ENCODE measurements at regions of chr2 and their contacts with region 1.

Region 1: DNA sequence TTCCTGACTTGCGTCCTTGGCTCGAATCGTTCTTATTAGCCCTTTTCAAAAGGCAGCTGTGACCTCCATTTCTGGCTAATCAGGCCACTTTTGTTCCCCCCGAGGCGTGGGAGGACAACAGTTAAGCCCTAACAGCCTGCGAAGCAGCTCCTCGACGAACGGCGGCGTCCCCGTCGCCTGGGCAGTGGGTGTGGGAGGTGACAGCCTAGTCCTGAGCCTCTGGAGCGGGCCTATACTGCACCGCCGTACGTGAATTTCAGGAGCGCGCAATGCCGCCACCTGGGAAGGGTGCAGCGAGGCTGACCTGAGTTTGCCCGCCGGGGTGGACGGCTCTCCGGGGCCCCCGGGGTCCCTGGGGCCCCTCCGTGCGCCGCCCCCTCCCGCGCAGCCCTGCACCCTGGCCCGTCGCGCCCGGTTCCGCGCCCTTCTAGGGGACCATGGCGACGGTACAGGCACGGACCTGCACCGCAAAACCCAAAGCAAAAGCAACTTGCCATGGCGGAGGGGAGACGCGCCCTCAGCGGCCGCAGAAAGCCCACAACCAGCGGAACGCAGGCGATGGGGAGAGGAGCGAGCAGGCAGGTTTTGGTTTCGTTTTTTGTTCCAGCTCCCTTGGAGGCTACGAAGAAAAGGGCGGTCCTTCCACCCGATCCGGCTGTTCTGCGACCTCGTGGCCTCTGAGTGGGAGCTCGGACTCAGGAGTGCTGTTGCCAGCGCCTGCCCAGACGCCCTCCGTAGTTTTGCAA is at the start of gene RBM43:
- DNase-seq: peak; percentile 98
- H3K4me3 ChIP-seq: peak within 1 kb of the TSS; percentile 74 to 99 (median 90)
- H3K27ac ChIP-seq: peak within 1 kb of the TSS; percentile 94 to 99 (median 96)
- H3K4me1 ChIP-seq: peaks cover 7 to 39% (median 36%) of the 10 kb centered on the region in 4 donors
- H3K27me3 ChIP-seq: no peaks in the 10 kb centered on the region
- CTCF ChIP-seq: no peak
- EP300 ChIP-seq: no peak
- POLR2A ChIP-seq: no peak
- total RNA-seq, gene RBM43: 3.3 to 8.3 (median 5.0) TPM

Region 2: GRCh38 chr2:150698016-150698661 is 563.3 kb before region 1 on chr2:
- intact Hi-C with region 1: no loop called
- DNase-seq: no peak
- H3K4me3 ChIP-seq: no peak overlapping the region
- H3K27ac ChIP-seq: peak overlapping the region in 2 of 4 donors; percentile 6 to 64
- H3K4me1 ChIP-seq: peaks cover 0 to 4% (median 0%) of the 10 kb centered on the region in 4 donors
- H3K27me3 ChIP-seq: no peaks in the 10 kb centered on the region
- CTCF ChIP-seq: no peak
- EP300 ChIP-seq: no peak
- POLR2A ChIP-seq: no peak

Region 3: GRCh38 chr2:151409601-151410484 is 148.4 kb after region 1 on chr2 and contains the start of gene RIF1:
- intact Hi-C with region 1: loop called (anchors 10 kb)
- DNase-seq: peak; percentile 96
- H3K4me3 ChIP-seq: peak within 1 kb of the TSS; percentile 83 to 96 (median 88)
- H3K27ac ChIP-seq: peak within 1 kb of the TSS; percentile 86 to 93 (median 92)
- H3K4me1 ChIP-seq: peaks cover 13 to 24% (median 19%) of the 10 kb centered on the region in 4 donors
- H3K27me3 ChIP-seq: no peaks in the 10 kb centered on the region
- CTCF ChIP-seq: peak; percentile 63 to 74 (median 71)
- EP300 ChIP-seq: no peak
- POLR2A ChIP-seq: no peak
- total RNA-seq, gene RIF1: 25.3 to 31.0 (median 28.9) TPM

Measured in esophagus muscularis mucosa (tissue), 4 donors.